ENCODE measurements at regions of chr17 and their contacts with region 1.

Region 1: GRCh38 chr17:58703137-58703972 is 11.0 kb downstream of the RAD51C start:
- DNase-seq: no peak
- H3K4me3 Mint-ChIP-seq: no peak overlapping the region
- H3K27ac Mint-ChIP-seq: peak overlapping the region; percentile 89
- H3K4me1 Mint-ChIP-seq: peaks cover 48% of the 10 kb centered on the region
- H3K27me3 Mint-ChIP-seq: no peaks in the 10 kb centered on the region

Region 2: GRCh38 chr17:58417300-58418092 is 285.9 kb before region 1 on chr17 and contains the start of gene RNF43:
- intact Hi-C with region 1: no loop called
- DNase-seq: peak; percentile 75
- H3K4me3 Mint-ChIP-seq: peak within 1 kb of the TSS; percentile 2
- H3K27ac Mint-ChIP-seq: peak within 1 kb of the TSS; percentile 47
- H3K4me1 Mint-ChIP-seq: peaks cover 28% of the 10 kb centered on the region
- H3K27me3 Mint-ChIP-seq: peaks cover 7% of the 10 kb centered on the region
- total RNA-seq, gene RNF43: 0.47 and 0.86 TPM in 2 replicates

Region 3: DNA sequence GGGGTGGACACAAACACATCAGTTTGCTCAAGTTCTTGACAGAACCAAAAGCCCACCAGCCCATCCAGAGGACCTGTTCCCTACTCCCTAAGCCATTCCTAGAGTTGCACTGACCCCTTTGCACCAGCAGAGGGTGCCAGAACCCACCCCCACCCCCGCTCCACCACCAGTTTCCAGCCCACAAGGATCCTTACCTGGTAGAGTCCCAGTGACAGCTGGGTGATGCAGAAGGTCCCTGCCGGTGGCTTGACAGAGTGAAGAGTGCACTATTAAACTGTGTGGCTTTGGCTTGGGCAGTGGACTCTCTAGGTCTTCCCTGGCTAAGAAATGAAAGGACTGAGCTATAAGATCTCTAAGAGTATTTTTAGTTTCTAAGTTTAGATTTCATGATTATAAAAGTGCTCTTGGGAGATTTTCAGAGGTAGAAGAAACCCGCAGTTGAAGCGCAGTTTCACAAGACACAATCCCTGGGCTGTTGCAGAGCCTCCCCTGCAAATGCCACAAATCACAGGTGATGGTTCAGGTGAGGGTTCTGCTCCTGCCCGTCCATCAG is 115.6 kb before region 1 on chr17:
- intact Hi-C with region 1: loop called (anchors 5 kb)
- DNase-seq: peak; percentile 15
- H3K4me3 Mint-ChIP-seq: no peak overlapping the region
- H3K27ac Mint-ChIP-seq: no peak overlapping the region
- H3K4me1 Mint-ChIP-seq: no peaks in the 10 kb centered on the region
- H3K27me3 Mint-ChIP-seq: peaks cover 2% of the 10 kb centered on the region

Region 4: DNA sequence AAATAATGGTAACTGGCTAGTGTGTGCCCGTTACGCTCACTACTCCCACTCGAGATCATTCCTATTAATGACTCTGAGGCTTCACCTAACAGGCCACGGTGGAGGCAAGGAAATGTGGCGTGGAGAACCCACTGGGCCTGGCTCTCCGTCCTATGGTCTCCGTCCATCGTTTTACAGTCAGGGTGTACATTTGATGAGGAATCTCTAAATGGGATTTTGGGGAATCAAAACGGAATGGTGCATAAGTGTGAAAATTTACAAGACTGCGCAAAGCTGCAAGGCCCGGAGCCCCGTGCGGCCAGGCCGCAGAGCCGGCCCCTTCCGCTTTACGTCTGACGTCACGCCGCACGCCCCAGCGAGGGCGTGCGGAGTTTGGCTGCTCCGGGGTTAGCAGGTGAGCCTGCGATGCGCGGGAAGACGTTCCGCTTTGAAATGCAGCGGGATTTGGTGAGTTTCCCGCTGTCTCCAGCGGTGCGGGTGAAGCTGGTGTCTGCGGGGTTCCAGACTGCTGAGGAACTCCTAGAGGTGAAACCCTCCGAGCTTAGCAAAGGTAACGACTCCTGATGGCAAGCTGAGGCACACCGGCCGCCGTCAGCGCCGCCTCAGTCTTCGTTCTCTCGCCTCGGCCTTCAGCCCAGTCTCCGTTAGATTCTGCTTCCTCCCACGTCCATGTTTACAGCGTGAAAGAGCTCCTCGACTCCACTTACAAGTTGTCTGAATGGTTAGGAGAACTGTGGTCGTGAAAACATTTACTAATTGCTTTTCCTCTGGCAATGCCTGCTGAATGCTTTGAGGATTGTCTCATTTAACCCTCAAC is 10.9 kb before region 1 on chr17 and contains the start of gene RAD51C:
- intact Hi-C with region 1: loop called (anchors 1 kb)
- DNase-seq: peak; percentile 86
- H3K4me3 Mint-ChIP-seq: peak within 1 kb of the TSS; percentile 97
- H3K27ac Mint-ChIP-seq: peak within 1 kb of the TSS; percentile 98
- H3K4me1 Mint-ChIP-seq: peaks cover 31% of the 10 kb centered on the region
- H3K27me3 Mint-ChIP-seq: no peaks in the 10 kb centered on the region
- total RNA-seq, gene RAD51C: 86.3 and 91.2 TPM in 2 replicates